SK-N-SH (cell line): ENCODE measurements at regions of chr6 and their contacts with region 1.

Region 1: DNA sequence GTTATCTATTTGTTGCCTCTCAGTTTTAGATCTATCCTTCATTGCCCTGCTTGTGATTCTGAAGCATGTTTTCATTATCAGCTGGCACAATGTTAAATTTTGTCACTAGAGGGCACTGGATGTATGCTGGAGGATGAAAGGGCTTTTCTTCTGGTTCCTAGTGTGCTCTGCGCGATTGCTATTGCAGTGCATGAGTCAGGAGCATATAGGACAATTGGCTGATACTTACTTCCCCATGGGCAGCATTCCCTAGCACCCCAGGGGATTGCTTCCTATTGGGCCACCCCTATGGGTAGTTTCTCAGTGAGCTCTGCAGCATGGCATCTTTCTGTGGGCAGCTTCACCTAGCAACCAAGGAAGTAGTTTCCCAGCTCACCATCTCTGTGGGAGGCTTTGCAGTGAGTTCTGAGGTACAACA is 280.3 kb upstream of the SYNCRIP start:
- DNase-seq: peak; percentile 53
- H3K4me3 ChIP-seq: peak overlapping the region in 1 of 2 experiments; percentile 24; a peak in 2 of 4 replicates
- H3K27ac ChIP-seq: peak overlapping the region in 1 of 2 experiments; percentile 90; a peak in 2 of 4 replicates
- H3K4me1 ChIP-seq: peaks cover 0 to 7% of the 10 kb centered on the region in 2 experiments; a peak in 1 of 4 replicates
- H3K27me3 ChIP-seq: no peaks in the 10 kb centered on the region
- CTCF ChIP-seq: peak; percentile 50
- EP300 ChIP-seq: peak in 1 of 2 experiments; percentile 42; a peak in 1 of 4 replicates
- RAD21 ChIP-seq: peak; percentile 99

Region 2: DNA sequence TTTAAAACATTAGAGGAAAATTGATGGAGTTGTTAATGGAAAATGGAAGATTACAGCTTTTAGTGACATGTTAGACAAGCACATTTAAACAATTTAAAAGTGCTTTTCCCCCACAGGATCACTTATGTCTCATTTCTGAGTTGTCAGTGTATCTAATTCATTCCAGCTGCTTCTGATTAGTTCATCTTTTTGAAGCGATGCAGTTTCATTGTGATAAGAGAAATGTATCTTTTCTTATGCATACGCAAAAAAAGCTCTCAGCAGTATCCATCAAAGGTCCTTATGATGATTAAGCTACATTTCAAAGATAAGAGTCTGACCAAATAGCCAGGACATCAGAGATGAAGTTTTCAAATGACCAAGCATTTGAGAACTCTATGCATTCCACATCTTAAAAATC is 292.3 kb after region 1 on chr6:
- CTCF ChIA-PET with region 1: interaction called, 16 read pairs
- POLR2A ChIA-PET with region 1: interaction called, 6 read pairs
- DNase-seq: peak; percentile 48
- H3K4me3 ChIP-seq: no peak overlapping the region
- H3K27ac ChIP-seq: peak overlapping the region in 1 of 2 experiments; percentile 99; a peak in 2 of 4 replicates
- H3K4me1 ChIP-seq: peaks cover 0 to 10% of the 10 kb centered on the region in 2 experiments; a peak in 2 of 4 replicates
- H3K27me3 ChIP-seq: no peaks in the 10 kb centered on the region
- CTCF ChIP-seq: no peak
- EP300 ChIP-seq: peak in 1 of 2 experiments; percentile 98; a peak in 2 of 4 replicates
- RAD21 ChIP-seq: peak; percentile 51

Region 3: GRCh38 chr6:86537263-86537861 is 614.3 kb after region 1 on chr6:
- CTCF ChIA-PET with region 1: interaction called, 17 read pairs
- POLR2A ChIA-PET with region 1: interaction called, 4 read pairs
- DNase-seq: peak; percentile 44
- H3K4me3 ChIP-seq: no peak overlapping the region
- H3K27ac ChIP-seq: peak overlapping the region in 1 of 2 experiments; percentile 100; a peak in 2 of 4 replicates
- H3K4me1 ChIP-seq: peaks cover 0 to 20% of the 10 kb centered on the region in 2 experiments; a peak in 2 of 4 replicates
- H3K27me3 ChIP-seq: no peaks in the 10 kb centered on the region
- CTCF ChIP-seq: no peak
- EP300 ChIP-seq: peak in 1 of 2 experiments; percentile 98; a peak in 2 of 4 replicates
- RAD21 ChIP-seq: peak; percentile 58

Region 4: DNA sequence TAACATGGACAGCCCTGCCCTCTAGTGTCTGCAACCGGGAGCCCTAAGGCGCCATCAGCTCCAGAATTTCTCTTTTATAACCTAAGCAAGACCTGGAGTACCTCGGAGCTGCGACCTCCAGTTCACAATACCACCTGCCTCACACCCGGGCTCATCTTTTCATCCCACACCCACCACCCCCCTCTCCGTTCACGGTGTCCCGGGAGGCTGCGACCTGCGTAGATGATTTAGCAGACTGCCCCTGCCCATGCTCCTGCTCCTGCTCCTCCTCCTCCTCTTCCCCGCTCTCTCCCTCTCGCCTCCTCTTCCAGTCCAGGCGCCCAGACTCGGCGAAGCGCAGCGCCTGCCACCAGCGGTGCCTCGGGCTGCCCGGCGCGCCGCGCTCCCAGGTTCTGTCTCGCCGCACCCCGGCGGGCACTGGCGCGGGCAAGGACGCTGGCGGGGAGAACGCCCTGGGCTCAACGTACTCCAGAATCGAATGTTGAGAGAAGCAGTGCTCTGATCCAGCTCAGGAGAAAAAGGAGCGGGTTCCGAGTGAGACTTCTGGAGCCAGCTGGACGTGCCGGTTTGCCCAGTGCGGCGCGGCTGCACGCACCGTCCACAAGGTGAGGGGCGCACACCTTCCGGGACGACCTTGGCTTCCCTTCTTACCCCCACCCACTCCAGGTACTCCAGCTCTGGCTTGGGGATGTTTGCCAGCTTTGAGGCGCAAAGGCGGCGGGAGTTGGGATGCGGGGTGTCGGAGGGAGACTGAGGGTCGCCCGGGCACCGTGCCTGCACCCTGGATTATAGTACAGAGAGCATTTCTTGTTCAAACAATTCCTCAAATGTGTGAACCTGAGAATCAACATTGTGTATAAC is 1014.4 kb after region 1 on chr6 and contains the start of gene HTR1E:
- CTCF ChIA-PET with region 1: interaction called, 68 read pairs
- POLR2A ChIA-PET with region 1: interaction called, 25 read pairs
- DNase-seq: peak; percentile 86
- H3K4me3 ChIP-seq: peak within 1 kb of the TSS; percentile 50 to 59
- H3K27ac ChIP-seq: peak within 1 kb of the TSS in 1 of 2 experiments; percentile 95; a peak in 2 of 4 replicates
- H3K4me1 ChIP-seq: peaks cover 0 to 15% of the 10 kb centered on the region in 2 experiments; a peak in 1 of 4 replicates
- H3K27me3 ChIP-seq: peaks cover 9% of the 10 kb centered on the region; the same call in 1 of the 2 replicates
- CTCF ChIP-seq: peak; percentile 57
- EP300 ChIP-seq: no peak
- RAD21 ChIP-seq: peak; percentile 86
- polyA plus RNA-seq, gene HTR1E: 0.02 and 0.03 TPM in 2 replicates

Region 5: GRCh38 chr6:87027021-87027420 is 1104.0 kb after region 1 on chr6:
- CTCF ChIA-PET with region 1: interaction called, 15 read pairs
- POLR2A ChIA-PET with region 1: no interaction called
- DNase-seq: no peak
- H3K4me3 ChIP-seq: no peak overlapping the region
- H3K27ac ChIP-seq: no peak overlapping the region
- H3K4me1 ChIP-seq: peaks cover 0 to 4% of the 10 kb centered on the region in 2 experiments; a peak in 2 of 4 replicates
- H3K27me3 ChIP-seq: no peaks in the 10 kb centered on the region
- CTCF ChIP-seq: no peak
- EP300 ChIP-seq: no peak
- RAD21 ChIP-seq: no peak